ENCODE measurements at regions of chr1 and their contacts with region 1.

Region 1: GRCh38 chr1:179365320-179366092 is at the start of gene AXDND1:
- DNase-seq: peak; percentile 93
- ATAC-seq: peak; percentile 95
- H3K4me3 Mint-ChIP-seq: peak within 1 kb of the TSS; percentile 94
- H3K27ac Mint-ChIP-seq: peak within 1 kb of the TSS; percentile 100
- H3K4me1 Mint-ChIP-seq: peaks cover 19% of the 10 kb centered on the region
- H3K27me3 Mint-ChIP-seq: no peaks in the 10 kb centered on the region
- total RNA-seq, gene AXDND1: 0.37 to 0.47 TPM

Region 2: GRCh38 chr1:178542560-178543356 is 822.7 kb before region 1 on chr1:
- CTCF ChIA-PET with region 1: no interaction called
- POLR2A ChIA-PET with region 1: no interaction called
- intact Hi-C with region 1: loop called (anchors 1 to 5 kb)
- DNase-seq: peak; percentile 93
- ATAC-seq: peak; percentile 88
- H3K4me3 Mint-ChIP-seq: peak overlapping the region; percentile 84
- H3K27ac Mint-ChIP-seq: peak overlapping the region; percentile 85
- H3K4me1 Mint-ChIP-seq: peaks cover 2% of the 10 kb centered on the region
- H3K27me3 Mint-ChIP-seq: no peaks in the 10 kb centered on the region

Region 3: GRCh38 chr1:179025125-179025974 is 340.2 kb before region 1 on chr1 and contains the start of gene FAM20B:
- CTCF ChIA-PET with region 1: no interaction called
- POLR2A ChIA-PET with region 1: no interaction called
- intact Hi-C with region 1: loop called in 1 of 2 experiments (anchors 1 kb)
- DNase-seq: peak; percentile 93
- ATAC-seq: peak; percentile 85
- H3K4me3 Mint-ChIP-seq: peak within 1 kb of the TSS; percentile 87
- H3K27ac Mint-ChIP-seq: peak within 1 kb of the TSS; percentile 87
- H3K4me1 Mint-ChIP-seq: peaks cover 39% of the 10 kb centered on the region
- H3K27me3 Mint-ChIP-seq: no peaks in the 10 kb centered on the region
- total RNA-seq, gene FAM20B: 21.7 to 35.8 TPM

Region 4: GRCh38 chr1:179142889-179143299 is 222.6 kb before region 1 on chr1:
- CTCF ChIA-PET with region 1: no interaction called
- POLR2A ChIA-PET with region 1: no interaction called
- intact Hi-C with region 1: loop called in 1 of 2 experiments (anchors 1 kb)
- DNase-seq: no peak
- ATAC-seq: no peak
- H3K4me3 Mint-ChIP-seq: peak overlapping the region; percentile 38
- H3K27ac Mint-ChIP-seq: peak overlapping the region; percentile 75
- H3K4me1 Mint-ChIP-seq: peaks cover 40% of the 10 kb centered on the region
- H3K27me3 Mint-ChIP-seq: no peaks in the 10 kb centered on the region

Region 5: DNA sequence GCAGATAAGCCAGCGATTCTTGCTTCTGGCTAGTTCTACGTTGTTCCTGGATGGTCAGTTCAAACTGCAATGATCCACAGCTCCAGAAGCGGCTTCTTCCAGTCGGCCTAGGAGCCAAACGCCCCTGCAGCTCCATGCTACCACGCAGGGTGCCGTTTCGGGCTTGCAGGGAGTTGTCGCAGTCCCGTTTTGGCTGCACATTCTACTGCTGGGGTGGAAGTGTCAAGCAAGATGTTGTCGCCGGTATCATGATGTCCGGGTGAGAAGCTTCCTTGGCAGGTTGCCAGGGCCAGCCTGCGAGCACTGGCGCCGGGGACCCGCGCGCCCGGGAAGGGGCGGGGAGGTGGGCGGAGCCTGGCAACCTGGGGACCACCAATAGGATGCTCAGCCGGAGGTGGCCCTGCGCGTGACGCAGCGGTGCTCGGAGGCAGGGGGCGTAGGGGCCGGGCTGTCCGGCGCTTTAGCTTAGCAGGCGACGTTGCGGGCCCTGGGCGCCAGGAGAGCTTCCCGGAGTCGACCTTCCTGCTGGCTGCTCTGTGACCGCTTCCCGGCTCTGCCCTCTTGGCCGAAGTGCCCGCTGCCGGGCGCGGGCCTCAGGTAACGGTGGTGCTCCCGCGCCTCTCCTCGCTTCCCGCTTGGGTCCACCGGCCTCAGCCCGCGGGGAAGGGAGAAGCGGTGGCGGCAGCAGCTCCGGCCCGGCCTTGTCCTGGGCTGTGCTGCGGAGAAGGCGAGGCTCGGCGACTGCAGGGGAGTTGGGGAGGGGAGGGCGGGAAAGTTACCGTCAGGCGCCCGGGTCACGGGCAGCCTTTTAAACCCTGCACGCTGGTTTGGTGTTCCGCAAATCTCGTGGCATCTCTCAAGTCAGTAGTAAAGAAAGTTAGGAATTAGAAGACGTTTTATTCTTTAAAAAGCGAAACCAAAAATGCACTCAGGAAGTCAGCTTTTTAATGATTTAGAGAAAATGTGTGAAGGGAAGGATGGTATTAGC is 71.9 kb before region 1 on chr1 and contains the start of gene SOAT1:
- CTCF ChIA-PET with region 1: interaction called, 15 read pairs
- POLR2A ChIA-PET with region 1: interaction called, 3 read pairs
- intact Hi-C with region 1: loop called (anchors 1 kb)
- DNase-seq: peak; percentile 96
- ATAC-seq: peak; percentile 95
- H3K4me3 Mint-ChIP-seq: peak within 1 kb of the TSS; percentile 77
- H3K27ac Mint-ChIP-seq: peak within 1 kb of the TSS; percentile 91
- H3K4me1 Mint-ChIP-seq: peaks cover 40% of the 10 kb centered on the region
- H3K27me3 Mint-ChIP-seq: no peaks in the 10 kb centered on the region
- total RNA-seq, gene SOAT1: 49.8 to 52.0 TPM

Measured in activated CD4-positive, alpha-beta T cell treated with anti-CD3 and anti-CD28 coated beads for 36 hours (primary cell).